ENCODE measurements at regions of chr3 and their contacts with region 1.

Region 1: GRCh38 chr3:158659454-158660237 is 12.8 kb downstream of the LXN start:
- DNase-seq: no peak
- ATAC-seq: peak; percentile 88
- H3K4me3 ChIP-seq: no peak overlapping the region
- H3K27ac ChIP-seq: no peak overlapping the region
- H3K4me1 ChIP-seq: no peaks in the 10 kb centered on the region
- H3K27me3 ChIP-seq: no peaks in the 10 kb centered on the region
- CTCF ChIP-seq: peak; percentile 56 to 69 (median 68)
- EP300 ChIP-seq: no peak
- POLR2A ChIP-seq: no peak
- RAD21 ChIP-seq: peak; percentile 43; the same call in 1 of the 2 replicates

Region 2: DNA sequence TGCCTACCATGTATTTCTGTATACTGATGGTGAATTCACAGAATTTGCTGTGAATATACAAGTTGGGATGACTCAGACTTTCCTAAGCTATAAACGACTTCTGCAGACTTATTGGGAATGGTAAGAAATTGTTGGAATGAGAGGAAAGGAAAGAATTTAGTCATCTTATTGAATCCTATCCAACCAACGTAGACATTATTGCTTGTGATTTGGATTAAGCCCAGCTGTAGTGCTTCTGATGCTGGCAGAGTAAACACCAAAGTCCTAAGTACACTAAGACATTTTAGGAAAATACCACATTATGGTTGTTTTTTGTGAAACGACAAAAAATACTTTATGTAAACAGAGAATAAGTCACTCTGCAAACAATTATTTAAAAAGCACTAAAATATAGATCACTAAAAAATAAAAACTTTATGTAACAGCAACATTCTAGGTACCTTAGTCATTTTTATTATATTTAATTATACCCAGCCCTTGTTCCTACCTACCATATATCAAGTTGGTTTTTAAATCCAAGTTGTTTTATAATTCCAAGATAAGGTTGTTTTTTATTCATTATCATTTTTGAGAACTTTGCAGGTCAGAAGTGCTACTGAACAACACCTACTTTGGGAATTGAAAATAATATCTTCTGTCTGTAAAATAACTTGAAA is 187.9 kb before region 1 on chr3:
- CTCF ChIA-PET with region 1: no interaction called
- POLR2A ChIA-PET with region 1: no interaction called
- RAD21 ChIA-PET with region 1: no interaction called
- SMC1A ChIA-PET with region 1: no interaction called
- in situ Hi-C with region 1: no loop called
- intact Hi-C with region 1: no loop called
- DNase-seq: no peak
- ATAC-seq: no peak
- H3K4me3 ChIP-seq: no peak overlapping the region
- H3K27ac ChIP-seq: no peak overlapping the region
- H3K4me1 ChIP-seq: no peaks in the 10 kb centered on the region
- H3K27me3 ChIP-seq: no peaks in the 10 kb centered on the region
- CTCF ChIP-seq: no peak
- EP300 ChIP-seq: no peak
- POLR2A ChIP-seq: no peak
- RAD21 ChIP-seq: no peak

Region 3: DNA sequence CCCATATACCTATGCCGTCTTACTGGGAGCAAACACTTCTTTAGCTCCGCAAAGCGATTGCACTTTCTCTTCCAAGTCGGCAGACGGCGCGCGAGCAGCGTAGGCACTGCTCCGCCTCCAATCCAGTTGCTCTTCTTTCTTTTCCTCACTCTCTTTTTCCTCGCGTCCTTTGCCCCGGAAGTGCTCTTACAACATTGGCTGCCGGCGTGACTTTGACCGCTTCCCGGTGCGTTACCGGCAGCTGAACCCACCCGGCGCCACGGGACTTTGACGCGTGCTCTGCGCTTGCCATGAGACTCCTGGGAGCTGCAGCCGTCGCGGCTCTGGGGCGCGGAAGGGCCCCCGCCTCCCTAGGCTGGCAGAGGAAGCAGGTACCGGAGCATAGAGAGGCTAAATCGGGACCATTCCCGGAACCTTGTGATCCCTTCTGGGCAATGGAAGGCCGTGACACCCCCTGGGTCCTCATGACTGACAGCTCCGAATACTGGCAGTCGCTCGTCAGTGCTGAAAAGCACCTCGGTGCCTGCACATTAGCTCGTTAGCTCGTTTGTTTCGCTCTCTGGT is 15.2 kb before region 1 on chr3 and contains the start of gene GFM1:
- CTCF ChIA-PET with region 1: interaction called, 77 read pairs
- POLR2A ChIA-PET with region 1: interaction called, 4 read pairs
- RAD21 ChIA-PET with region 1: interaction called, 4 read pairs
- SMC1A ChIA-PET with region 1: interaction called, 8 read pairs
- in situ Hi-C with region 1: no loop called
- intact Hi-C with region 1: no loop called
- DNase-seq: peak; percentile 83
- ATAC-seq: peak; percentile 97
- H3K4me3 ChIP-seq: peak within 1 kb of the TSS; percentile 72
- H3K27ac ChIP-seq: peak within 1 kb of the TSS; percentile 75
- H3K4me1 ChIP-seq: no peaks in the 10 kb centered on the region
- H3K27me3 ChIP-seq: no peaks in the 10 kb centered on the region
- CTCF ChIP-seq: peak; percentile 96 to 99 (median 98); a peak in 5 of 6 replicates
- EP300 ChIP-seq: 0 out of 4 replicates have a peak, but pooled peaks of 1 of the 2 experiments have one; percentile 33
- POLR2A ChIP-seq: peak; percentile 95
- RAD21 ChIP-seq: no peak
- polyA plus RNA-seq, gene GFM1: 36.9 to 43.1 TPM

Region 4: DNA sequence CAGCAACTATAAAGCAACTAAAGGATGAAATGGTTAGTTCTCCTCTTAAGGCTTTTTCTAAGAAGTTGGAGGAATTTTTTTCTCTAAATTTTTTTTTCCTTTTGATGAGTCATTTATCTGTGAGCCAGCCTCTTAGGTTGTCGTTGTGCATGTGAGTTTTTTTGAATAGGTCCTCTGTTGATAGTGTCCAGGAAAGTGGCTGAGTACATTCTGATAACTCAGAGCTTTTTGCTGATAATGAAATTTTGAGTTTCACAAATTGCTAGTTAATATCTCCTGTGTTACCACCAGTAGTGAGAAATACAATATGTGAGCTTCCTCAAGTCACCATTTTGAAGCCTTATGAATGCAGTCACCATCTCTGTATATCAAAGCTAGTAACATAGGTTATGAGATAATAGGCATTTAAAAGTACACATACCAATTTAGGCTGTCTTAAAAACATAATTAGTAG is 19.9 kb after region 1 on chr3:
- CTCF ChIA-PET with region 1: interaction called, 10 read pairs
- POLR2A ChIA-PET with region 1: no interaction called
- RAD21 ChIA-PET with region 1: no interaction called
- SMC1A ChIA-PET with region 1: interaction called, 4 read pairs
- in situ Hi-C with region 1: no loop called
- intact Hi-C with region 1: no loop called
- DNase-seq: no peak
- ATAC-seq: no peak
- H3K4me3 ChIP-seq: no peak overlapping the region
- H3K27ac ChIP-seq: no peak overlapping the region
- H3K4me1 ChIP-seq: no peaks in the 10 kb centered on the region
- H3K27me3 ChIP-seq: no peaks in the 10 kb centered on the region
- CTCF ChIP-seq: no peak
- EP300 ChIP-seq: no peak
- POLR2A ChIP-seq: no peak
- RAD21 ChIP-seq: no peak

Region 5: DNA sequence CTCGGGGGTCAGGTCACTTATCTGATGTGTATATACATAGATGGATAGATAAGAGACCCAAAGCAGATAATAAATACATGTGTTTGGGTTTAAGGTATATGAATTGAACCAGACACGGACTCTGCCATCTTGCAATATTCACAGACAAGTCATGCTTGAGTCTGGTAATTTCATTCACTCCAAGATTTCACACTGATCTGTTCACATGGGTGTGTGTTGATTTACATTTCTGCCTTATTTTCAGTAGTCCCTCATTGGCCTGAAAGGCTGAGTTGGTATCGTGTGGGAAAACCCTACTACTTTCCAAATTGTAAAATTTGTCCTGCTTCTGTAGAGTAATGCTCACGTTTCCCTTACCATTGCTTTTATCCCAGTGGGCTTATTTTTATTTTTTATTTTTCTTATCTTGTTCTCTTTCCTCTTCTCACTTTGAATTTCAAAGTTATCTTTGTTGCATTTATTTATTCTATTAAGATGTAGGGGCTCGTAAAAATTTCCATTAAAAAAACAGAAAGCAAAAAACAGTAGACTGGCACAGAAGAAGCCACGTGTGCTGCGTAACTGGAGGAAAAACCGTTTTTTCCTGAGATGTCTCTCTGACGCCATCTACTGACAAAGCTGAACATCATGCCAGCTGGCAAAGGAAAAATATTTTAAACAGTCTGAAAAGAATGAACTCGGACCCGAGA is 131.4 kb after region 1 on chr3:
- CTCF ChIA-PET with region 1: interaction called, 78 read pairs
- POLR2A ChIA-PET with region 1: no interaction called
- RAD21 ChIA-PET with region 1: interaction called, 19 read pairs
- SMC1A ChIA-PET with region 1: interaction called, 16 read pairs
- in situ Hi-C with region 1: no loop called
- intact Hi-C with region 1: loop called (anchors 1 kb)
- DNase-seq: no peak
- ATAC-seq: peak; percentile 87
- H3K4me3 ChIP-seq: no peak overlapping the region
- H3K27ac ChIP-seq: no peak overlapping the region
- H3K4me1 ChIP-seq: no peaks in the 10 kb centered on the region
- H3K27me3 ChIP-seq: no peaks in the 10 kb centered on the region; a peak in 1 of 4 replicates
- CTCF ChIP-seq: peak; percentile 79 to 88 (median 79)
- EP300 ChIP-seq: no peak
- POLR2A ChIP-seq: no peak
- RAD21 ChIP-seq: peak; percentile 92

Measured in GM12878 (cell line).